Heart left ventricle (tissue), 16 donors: ENCODE measurements at regions of chr21 and their contacts with region 1.

Region 1: DNA sequence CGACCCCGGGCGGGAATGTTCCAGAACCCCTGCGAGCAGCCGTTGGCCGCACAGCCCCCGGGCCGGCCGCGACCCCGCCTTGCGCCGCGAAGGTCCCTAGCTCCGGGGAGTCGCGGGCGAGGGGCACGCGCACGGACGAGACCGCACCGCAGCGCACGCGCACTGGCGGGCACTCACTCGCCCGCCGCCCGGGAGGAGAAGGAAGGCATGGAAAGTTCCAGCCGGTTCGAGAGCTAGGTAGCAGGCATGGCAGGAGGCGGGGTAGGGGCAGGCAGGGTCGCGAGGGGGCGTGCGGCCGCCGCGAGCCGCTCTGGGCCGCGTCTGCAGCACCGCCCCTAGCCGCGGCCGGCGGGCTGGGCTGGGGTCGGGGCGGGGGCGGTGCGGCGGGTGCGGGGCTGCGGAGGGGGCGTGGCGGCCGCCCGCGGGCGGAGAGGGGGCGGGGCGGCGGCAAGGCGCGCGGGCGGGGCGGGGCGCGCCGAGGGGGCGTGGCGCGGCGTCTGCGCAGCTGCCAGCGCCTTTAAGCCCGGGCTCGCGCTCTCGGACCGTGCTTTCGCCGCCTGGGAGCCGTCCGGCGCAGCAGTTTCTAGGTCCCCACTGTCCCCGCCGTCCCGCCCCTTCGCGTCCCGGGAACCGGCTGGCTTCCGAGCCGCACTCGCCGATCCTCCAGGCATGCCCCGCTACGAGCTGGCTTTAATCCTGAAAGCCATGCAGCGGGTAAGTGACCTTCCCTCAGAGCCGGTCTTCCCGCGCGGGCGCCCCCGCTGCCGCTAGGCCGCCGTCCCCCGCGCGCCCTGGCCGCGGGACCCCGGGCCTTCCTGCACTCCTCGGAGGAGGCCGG is at the starts of genes MRPS6 and SLC5A3:
- DNase-seq: peak; percentile 86 to 92 (median 89)
- ATAC-seq: peak; percentile 78 to 94 (median 89)
- H3K4me3 ChIP-seq: peak within 1 kb of the TSS; percentile 49 to 93 (median 82)
- H3K27ac ChIP-seq: peak within 1 kb of the TSS; percentile 20 to 91 (median 86)
- H3K4me1 ChIP-seq: peaks cover 0 to 45% (median 29%) of the 10 kb centered on the region in 12 donors
- H3K27me3 ChIP-seq: no peaks in the 10 kb centered on the region
- CTCF ChIP-seq: peak in 1 of 12 donors; percentile 18
- POLR2A ChIP-seq: peak in 1 of 2 donors; percentile 96
- total RNA-seq, gene MRPS6: 21.8 to 59.8 (median 35.6) TPM
- total RNA-seq, gene SLC5A3: 2.4 to 6.2 (median 3.6) TPM

Region 2: GRCh38 chr21:33924079-33924765 is 149.0 kb before region 1 on chr21:
- intact Hi-C with region 1: loop called in 5 of 10 experiments (anchors 5 to 10 kb)
- DNase-seq: peak; percentile 85 to 93 (median 87)
- ATAC-seq: peak; percentile 79 to 98 (median 97)
- H3K4me3 ChIP-seq: peak overlapping the region in 1 of 12 donors; percentile 15
- H3K27ac ChIP-seq: peak overlapping the region in 1 of 12 donors; percentile 53
- H3K4me1 ChIP-seq: peaks cover 0 to 10% (median 5%) of the 10 kb centered on the region in 12 donors
- H3K27me3 ChIP-seq: no peaks in the 10 kb centered on the region
- CTCF ChIP-seq: peak; percentile 88 to 96 (median 90)
- POLR2A ChIP-seq: no peak

Region 3: GRCh38 chr21:33968080-33968994 is 104.9 kb before region 1 on chr21:
- intact Hi-C with region 1: loop called in 1 of 10 experiments (anchors 5 kb)
- DNase-seq: peak in 1 of 5 donors; percentile 38
- ATAC-seq: peak; percentile 30 to 85 (median 75)
- H3K4me3 ChIP-seq: no peak overlapping the region
- H3K27ac ChIP-seq: peak overlapping the region in 10 of 12 donors; percentile 8 to 73 (median 51)
- H3K4me1 ChIP-seq: peaks cover 2 to 37% (median 21%) of the 10 kb centered on the region in 12 donors
- H3K27me3 ChIP-seq: no peaks in the 10 kb centered on the region
- CTCF ChIP-seq: no peak
- POLR2A ChIP-seq: no peak

Region 4: GRCh38 chr21:34061983-34062382 is 11.3 kb before region 1 on chr21:
- intact Hi-C with region 1: no loop called
- DNase-seq: no peak
- ATAC-seq: no peak
- H3K4me3 ChIP-seq: no peak overlapping the region
- H3K27ac ChIP-seq: no peak overlapping the region
- H3K4me1 ChIP-seq: no peaks in the 10 kb centered on the region
- H3K27me3 ChIP-seq: no peaks in the 10 kb centered on the region
- CTCF ChIP-seq: no peak
- POLR2A ChIP-seq: no peak

Region 5: GRCh38 chr21:34105947-34106541 is 32.8 kb after region 1 on chr21:
- intact Hi-C with region 1: no loop called
- DNase-seq: no peak
- ATAC-seq: no peak
- H3K4me3 ChIP-seq: no peak overlapping the region
- H3K27ac ChIP-seq: no peak overlapping the region
- H3K4me1 ChIP-seq: peaks cover 0 to 19% (median 2%) of the 10 kb centered on the region in 12 donors
- H3K27me3 ChIP-seq: no peaks in the 10 kb centered on the region
- CTCF ChIP-seq: no peak
- POLR2A ChIP-seq: no peak

Region 6: GRCh38 chr21:34122047-34122446 is 48.8 kb after region 1 on chr21:
- intact Hi-C with region 1: loop called in 2 of 10 experiments (anchors 5 kb)
- DNase-seq: no peak
- ATAC-seq: no peak
- H3K4me3 ChIP-seq: no peak overlapping the region
- H3K27ac ChIP-seq: no peak overlapping the region
- H3K4me1 ChIP-seq: peaks cover 0 to 44% (median 11%) of the 10 kb centered on the region in 12 donors
- H3K27me3 ChIP-seq: no peaks in the 10 kb centered on the region
- CTCF ChIP-seq: no peak
- POLR2A ChIP-seq: no peak

Region 7: DNA sequence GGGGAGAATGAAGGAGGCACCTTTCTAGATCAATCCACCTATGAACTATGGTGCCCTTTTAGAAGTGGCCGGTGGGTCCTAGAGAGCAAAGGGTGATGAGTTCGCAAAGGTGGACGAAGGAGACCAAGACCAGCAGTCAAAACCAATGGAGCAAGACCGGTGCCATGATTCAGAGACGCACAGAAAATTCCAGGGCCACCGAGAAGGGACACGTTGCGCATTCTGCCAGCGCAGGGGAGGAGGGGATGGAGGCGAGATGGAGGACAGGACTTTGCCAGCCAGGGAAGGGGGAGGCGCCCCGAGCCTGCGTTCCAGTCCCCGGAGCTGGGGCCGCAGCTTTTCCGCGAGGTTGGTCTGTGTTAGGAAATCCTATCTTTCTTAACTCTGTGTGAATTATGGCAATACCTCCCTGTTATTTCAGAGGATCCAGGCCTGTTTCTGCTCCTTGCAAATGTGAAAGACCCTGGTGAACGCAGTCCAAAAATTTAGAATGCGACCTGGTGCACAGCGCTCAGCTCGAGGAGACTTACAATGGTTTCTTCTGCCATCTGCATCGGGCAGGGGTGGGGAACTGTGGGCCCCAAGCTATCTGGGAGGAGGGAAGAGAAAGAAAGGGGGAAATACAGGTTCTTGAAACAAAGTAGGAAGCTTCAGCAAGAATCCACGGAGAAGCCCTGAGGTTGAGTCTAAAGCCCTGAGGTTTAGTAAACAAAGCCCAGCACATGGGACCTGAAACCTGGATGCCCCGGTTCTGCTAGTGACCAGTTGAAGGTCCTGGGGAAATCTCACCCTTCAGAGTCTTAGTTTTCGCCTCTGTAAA is 129.5 kb after region 1 on chr21:
- intact Hi-C with region 1: loop called in 9 of 10 experiments (anchors 1 to 10 kb)
- DNase-seq: peak in 1 of 5 donors; percentile 26
- ATAC-seq: no peak
- H3K4me3 ChIP-seq: peak overlapping the region in 4 of 12 donors; percentile 5 to 56 (median 30)
- H3K27ac ChIP-seq: peak overlapping the region in 2 of 12 donors; percentile 37 to 79
- H3K4me1 ChIP-seq: peaks cover 0 to 63% (median 14%) of the 10 kb centered on the region in 12 donors
- H3K27me3 ChIP-seq: no peaks in the 10 kb centered on the region
- CTCF ChIP-seq: no peak
- POLR2A ChIP-seq: no peak

Region 8: DNA sequence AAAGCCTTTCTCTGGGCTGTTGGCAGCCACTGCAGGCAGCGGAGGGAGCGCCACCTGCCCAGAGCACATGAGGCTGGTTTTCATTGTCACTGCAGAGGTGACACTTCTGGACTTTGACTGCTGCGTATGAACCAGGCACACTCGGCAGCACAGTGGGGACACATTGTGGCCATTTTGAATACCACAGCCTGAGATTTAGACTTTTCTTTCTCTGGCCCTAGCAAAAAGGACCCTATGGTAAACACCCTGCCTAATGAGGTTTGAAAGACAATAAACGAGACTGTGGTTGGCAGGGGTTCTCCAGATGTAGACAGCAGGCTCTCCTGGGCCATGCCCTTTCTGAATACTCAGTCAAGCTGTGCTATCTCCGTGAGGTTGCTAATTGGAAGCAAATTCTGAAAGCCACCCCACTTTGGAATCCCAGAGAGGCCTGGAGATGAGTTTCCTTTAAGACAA is 278.6 kb after region 1 on chr21:
- intact Hi-C with region 1: loop called in 8 of 10 experiments (anchors 2 to 5 kb)
- DNase-seq: peak in 4 of 5 donors; percentile 36 to 70 (median 48)
- ATAC-seq: peak; percentile 73 to 88 (median 86)
- H3K4me3 ChIP-seq: no peak overlapping the region
- H3K27ac ChIP-seq: no peak overlapping the region
- H3K4me1 ChIP-seq: peaks cover 0 to 12% (median 2%) of the 10 kb centered on the region in 12 donors
- H3K27me3 ChIP-seq: no peaks in the 10 kb centered on the region
- CTCF ChIP-seq: peak; percentile 42 to 78 (median 70)
- POLR2A ChIP-seq: no peak